ENCODE measurements at regions of chr10 and their contacts with region 1.

Region 1: GRCh38 chr10:117684672-117685271 is 142.2 kb downstream of the EMX2 start:
- DNase-seq: no peak
- H3K4me3 ChIP-seq: no peak overlapping the region
- H3K27ac ChIP-seq: no peak overlapping the region
- H3K4me1 ChIP-seq: peaks cover 0 to 10% (median 0%) of the 10 kb centered on the region in 6 donors
- H3K27me3 ChIP-seq: peaks cover 0 to 44% (median 0%) of the 10 kb centered on the region in 7 donors
- CTCF ChIP-seq: peak in 6 of 11 experiments; percentile 9 to 46 (median 28)
- POLR2A ChIP-seq: no peak

Region 2: DNA sequence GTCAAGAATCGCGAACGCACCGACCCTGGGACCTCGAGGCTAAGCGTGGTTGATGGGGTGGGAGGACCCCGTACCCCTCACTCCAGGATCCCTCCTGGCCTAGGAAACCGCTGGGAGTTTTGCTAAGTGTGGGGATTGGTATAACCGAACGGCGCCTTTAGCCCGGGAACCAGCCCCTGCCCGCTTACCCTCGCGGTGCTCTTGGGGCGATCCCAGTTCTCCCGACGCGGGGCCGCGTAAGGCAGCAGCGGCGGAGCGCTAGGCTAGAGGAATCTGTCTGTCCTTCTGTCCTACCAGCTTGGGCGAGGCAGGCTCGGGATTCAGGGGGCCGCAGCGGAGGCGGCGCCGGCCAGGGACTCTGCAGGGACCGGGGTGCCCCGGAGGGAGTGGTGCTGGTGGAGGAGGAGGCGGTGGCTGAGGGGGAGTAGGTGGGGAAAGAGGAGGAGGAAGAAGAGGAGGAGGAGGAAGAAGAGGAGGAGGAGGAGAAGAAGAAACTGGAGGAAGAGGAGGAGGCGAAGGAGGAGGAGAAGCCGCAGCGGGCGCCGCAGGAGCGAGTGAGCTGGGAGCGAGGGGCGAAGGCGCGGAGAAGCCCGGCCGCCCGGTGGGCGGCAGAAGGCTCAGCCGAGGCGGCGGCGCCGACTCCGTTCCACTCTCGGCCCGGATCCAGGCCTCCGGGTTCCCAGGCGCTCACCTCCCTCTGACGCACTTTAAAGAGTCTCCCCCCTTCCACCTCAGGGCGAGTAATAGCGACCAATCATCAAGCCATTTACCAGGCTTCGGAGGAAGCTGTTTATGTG is 142.7 kb before region 1 on chr10:
- intact Hi-C with region 1: loop called (anchors 10 kb)
- DNase-seq: no peak
- H3K4me3 ChIP-seq: peak overlapping the region in 1 of 8 donors; percentile 22
- H3K27ac ChIP-seq: no peak overlapping the region
- H3K4me1 ChIP-seq: peaks cover 17 to 75% (median 60%) of the 10 kb centered on the region in 6 donors
- H3K27me3 ChIP-seq: peaks cover 28 to 100% (median 100%) of the 10 kb centered on the region in 7 donors
- CTCF ChIP-seq: no peak
- POLR2A ChIP-seq: no peak